ENCODE measurements at regions of chr14 and their contacts with region 1.

Region 1: GRCh38 chr14:69107407-69108003 is 45.4 kb downstream of the DCAF5 start:
- DNase-seq: peak; percentile 55 to 71
- ATAC-seq: peak; percentile 85 to 91; a peak in 5 of 6 replicates
- H3K4me3 ChIP-seq: no peak overlapping the region
- H3K27ac ChIP-seq: peak overlapping the region in 1 of 2 experiments; percentile 5; a peak in 1 of 6 replicates
- H3K4me1 ChIP-seq: no peaks in the 10 kb centered on the region; the same call in 2 of the 3 replicates
- CTCF ChIP-seq: peak; percentile 86
- EP300 ChIP-seq: no peak
- POLR2A ChIP-seq: no peak
- RAD21 ChIP-seq: peak; percentile 92 to 93

Region 2: GRCh38 chr14:67883717-67884116 is 1223.8 kb before region 1 on chr14:
- CTCF ChIA-PET with region 1: interaction called, 19 read pairs
- POLR2A ChIA-PET with region 1: no interaction called
- DNase-seq: peak; percentile 18
- ATAC-seq: no peak
- H3K4me3 ChIP-seq: no peak overlapping the region
- H3K27ac ChIP-seq: peak overlapping the region in 1 of 2 experiments; percentile 71; a peak in 2 of 6 replicates
- H3K4me1 ChIP-seq: peaks cover 12% of the 10 kb centered on the region; the same call in 1 of the 3 replicates
- CTCF ChIP-seq: peak; percentile 65
- EP300 ChIP-seq: no peak
- POLR2A ChIP-seq: no peak
- RAD21 ChIP-seq: peak; percentile 64 to 79

Region 3: GRCh38 chr14:68862954-68863594 is 244.4 kb before region 1 on chr14:
- CTCF ChIA-PET with region 1: interaction called, 233 read pairs
- POLR2A ChIA-PET with region 1: no interaction called
- DNase-seq: peak; percentile 79 to 85
- ATAC-seq: peak; percentile 79 to 85
- H3K4me3 ChIP-seq: no peak overlapping the region
- H3K27ac ChIP-seq: peak overlapping the region; percentile 41 to 62; a peak in 3 of 6 replicates
- H3K4me1 ChIP-seq: no peaks in the 10 kb centered on the region
- CTCF ChIP-seq: peak; percentile 90
- EP300 ChIP-seq: no peak
- POLR2A ChIP-seq: no peak
- RAD21 ChIP-seq: peak; percentile 94 to 95

Region 4: DNA sequence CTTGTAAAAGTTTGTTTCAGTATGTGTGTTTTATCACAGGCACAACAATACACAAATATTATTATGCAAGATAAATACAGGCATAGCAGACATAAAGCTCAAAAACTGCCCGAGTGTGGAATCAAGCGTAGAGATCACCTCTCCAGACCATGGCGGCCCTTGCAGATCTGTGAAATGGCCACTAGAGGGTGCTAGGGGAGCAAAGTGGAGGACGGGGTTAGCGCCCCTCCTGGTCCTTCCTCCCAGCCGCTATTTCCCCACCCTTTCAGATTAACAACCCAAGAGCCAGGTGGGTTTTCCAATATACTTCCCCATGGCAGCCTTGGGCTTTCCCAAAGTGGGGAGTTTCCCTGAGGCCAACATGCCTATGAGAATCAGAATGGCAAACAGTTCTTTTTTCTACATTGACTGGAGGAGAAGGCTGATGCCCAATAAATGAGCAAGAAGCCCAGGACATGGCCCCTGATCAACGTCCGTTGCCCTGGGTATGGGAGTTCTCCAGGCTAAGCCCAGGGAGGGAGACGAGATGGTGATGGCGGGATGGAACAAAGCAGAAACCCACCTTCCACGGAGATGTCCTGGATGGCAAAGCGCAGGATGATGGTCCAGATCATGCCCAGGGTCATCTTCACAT is 195.8 kb before region 1 on chr14:
- CTCF ChIA-PET with region 1: interaction called, 83 read pairs
- POLR2A ChIA-PET with region 1: no interaction called
- DNase-seq: peak; percentile 78 to 92
- ATAC-seq: peak; percentile 89 to 95
- H3K4me3 ChIP-seq: no peak overlapping the region
- H3K27ac ChIP-seq: peak overlapping the region; percentile 42 to 55; a peak in 4 of 6 replicates
- H3K4me1 ChIP-seq: peaks cover 31% of the 10 kb centered on the region
- CTCF ChIP-seq: peak; percentile 99
- EP300 ChIP-seq: no peak
- POLR2A ChIP-seq: no peak
- RAD21 ChIP-seq: peak; percentile 97 to 98

Region 5: DNA sequence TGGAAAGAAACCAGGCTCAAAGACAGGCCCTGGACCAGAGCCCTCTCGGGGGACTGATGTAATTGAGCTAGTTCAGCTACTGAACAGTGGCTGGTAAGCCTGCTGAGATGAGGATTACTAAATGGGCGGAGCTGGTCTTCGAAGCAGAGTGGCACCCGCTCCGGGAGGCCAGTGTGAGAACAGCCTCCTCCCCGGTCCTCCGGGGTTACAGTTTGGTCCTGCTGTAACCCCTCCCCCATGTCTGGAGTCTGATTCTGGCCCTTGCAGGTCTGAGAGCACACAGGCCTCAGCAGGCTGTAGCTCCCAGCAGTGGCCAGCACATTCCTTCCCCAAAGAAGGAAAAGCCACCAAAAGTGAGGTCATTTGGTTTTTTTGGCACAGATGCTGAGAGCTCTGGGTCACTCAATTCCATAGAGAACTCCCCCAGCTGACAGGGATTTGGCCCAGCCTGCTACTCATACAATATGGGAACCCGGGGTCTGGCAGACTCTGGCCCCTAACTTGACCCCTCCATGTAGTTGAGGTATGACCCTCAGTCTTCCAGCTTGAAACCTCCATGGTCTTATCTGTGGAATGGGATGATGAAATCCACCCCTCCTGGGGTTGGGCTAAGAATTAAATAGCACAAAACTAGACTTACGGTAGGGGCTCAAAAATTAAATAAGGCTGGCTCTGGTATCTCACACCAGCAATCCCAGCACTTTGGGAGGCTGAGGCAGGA is 167.5 kb before region 1 on chr14:
- CTCF ChIA-PET with region 1: interaction called, 12 read pairs
- POLR2A ChIA-PET with region 1: no interaction called
- DNase-seq: peak; percentile 82 to 98
- ATAC-seq: peak; percentile 69 to 78
- H3K4me3 ChIP-seq: no peak overlapping the region
- H3K27ac ChIP-seq: peak overlapping the region; percentile 98 to 99
- H3K4me1 ChIP-seq: peaks cover 95% of the 10 kb centered on the region
- CTCF ChIP-seq: no peak
- EP300 ChIP-seq: peak; percentile 61 to 84; a peak in 3 of 5 replicates
- POLR2A ChIP-seq: no peak
- RAD21 ChIP-seq: peak; percentile 19 to 48; a peak in 4 of 5 replicates

Region 6: DNA sequence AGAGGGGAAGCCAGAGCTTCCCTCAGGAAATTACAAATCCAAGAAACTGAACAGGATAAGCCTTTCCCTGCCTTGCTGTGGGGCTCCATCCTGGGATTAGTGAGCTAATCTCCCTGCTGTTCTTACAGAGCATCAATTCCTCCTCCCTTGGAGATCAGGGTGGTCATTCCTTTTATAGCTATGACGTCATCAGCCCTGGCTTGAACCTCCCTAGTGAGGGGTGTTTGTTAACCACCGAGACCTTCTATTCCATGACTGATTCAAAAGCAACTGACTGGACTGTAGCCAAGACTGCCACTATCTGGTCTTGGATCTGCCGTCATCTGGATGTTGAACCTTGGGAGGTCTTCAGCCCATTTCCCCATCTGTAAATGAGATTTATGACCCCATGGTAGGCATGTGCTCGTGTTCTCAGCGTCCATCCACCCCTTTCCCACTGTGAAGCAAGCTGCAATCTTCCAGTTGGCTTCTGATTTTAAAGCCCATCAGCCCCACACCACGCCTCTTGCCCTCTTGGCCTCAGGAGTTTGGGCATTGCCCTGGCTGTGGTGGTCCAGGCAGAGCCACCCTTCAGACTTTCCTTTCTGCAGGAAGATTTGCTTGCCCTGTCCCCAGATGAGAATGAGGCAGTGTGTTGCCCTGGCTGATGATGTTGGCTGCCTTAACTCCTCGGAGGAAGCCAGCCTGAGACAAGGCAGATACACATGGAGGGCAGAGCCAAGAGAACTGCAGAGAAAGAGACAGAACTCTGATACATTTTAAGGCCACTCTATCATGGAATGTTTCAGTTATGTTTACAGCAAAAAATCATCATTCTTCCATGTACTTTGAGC is 68.8 kb before region 1 on chr14:
- CTCF ChIA-PET with region 1: interaction called, 10 read pairs
- POLR2A ChIA-PET with region 1: no interaction called
- DNase-seq: peak; percentile 35 to 77
- ATAC-seq: peak; percentile 59 to 70
- H3K4me3 ChIP-seq: no peak overlapping the region
- H3K27ac ChIP-seq: peak overlapping the region; percentile 67 to 83
- H3K4me1 ChIP-seq: peaks cover 38% of the 10 kb centered on the region
- CTCF ChIP-seq: no peak
- EP300 ChIP-seq: peak; percentile 30 to 44; a peak in 2 of 5 replicates
- POLR2A ChIP-seq: no peak
- RAD21 ChIP-seq: no peak; a peak in 1 of 5 replicates

Region 7: GRCh38 chr14:69191340-69192111 is 84.0 kb after region 1 on chr14 and contains the start of gene EXD2:
- CTCF ChIA-PET with region 1: no interaction called
- POLR2A ChIA-PET with region 1: no interaction called
- DNase-seq: peak; percentile 94 to 97
- ATAC-seq: peak; percentile 99
- H3K4me3 ChIP-seq: peak within 1 kb of the TSS; percentile 70
- H3K27ac ChIP-seq: peak within 1 kb of the TSS; percentile 87 to 94
- H3K4me1 ChIP-seq: peaks cover 6% of the 10 kb centered on the region; the same call in 2 of the 3 replicates
- CTCF ChIP-seq: no peak
- EP300 ChIP-seq: no peak
- POLR2A ChIP-seq: peak; percentile 22
- RAD21 ChIP-seq: no peak; a peak in 1 of 5 replicates
- polyA plus RNA-seq, gene EXD2: 22.1 and 22.3 TPM in 2 replicates